ENCODE measurements at regions of chr4 and their contacts with region 1.

Region 1: DNA sequence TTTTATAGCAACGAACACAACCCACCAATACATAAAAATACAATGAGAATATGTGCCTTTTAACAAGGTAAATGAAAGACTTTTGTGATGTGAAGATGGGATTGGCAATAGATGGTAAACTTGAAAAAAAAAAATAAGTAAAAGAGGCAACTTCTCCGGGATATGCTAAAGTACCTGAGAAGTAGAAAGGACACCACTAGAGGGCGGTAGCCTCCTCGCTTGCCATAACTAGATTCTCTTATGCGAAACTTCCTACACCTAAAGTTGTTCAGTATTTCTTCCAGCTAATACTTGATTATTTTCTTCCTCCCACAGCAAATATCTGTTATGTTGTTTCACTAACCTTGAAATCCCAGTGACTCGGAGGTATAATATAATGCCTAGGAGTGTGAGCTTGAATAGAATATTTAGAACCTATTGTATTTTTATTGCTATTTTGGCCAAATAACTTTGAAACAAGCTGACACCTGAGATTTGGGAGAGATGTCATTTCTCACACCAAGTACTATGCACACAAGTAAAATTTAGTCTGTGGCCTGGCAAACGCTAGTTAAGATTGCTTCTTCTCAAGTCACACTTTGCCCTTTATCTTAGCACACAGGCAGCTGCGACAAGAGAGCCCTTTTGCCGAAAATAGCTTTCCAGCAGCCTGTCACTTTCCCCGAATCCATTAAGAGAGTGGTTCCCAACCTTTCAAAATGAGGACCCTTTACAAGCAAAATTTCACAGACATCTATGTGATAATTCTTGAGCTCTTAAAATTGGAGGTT is 44.9 kb upstream of the PDLIM5 start:
- DNase-seq: peak; percentile 48

Region 2: DNA sequence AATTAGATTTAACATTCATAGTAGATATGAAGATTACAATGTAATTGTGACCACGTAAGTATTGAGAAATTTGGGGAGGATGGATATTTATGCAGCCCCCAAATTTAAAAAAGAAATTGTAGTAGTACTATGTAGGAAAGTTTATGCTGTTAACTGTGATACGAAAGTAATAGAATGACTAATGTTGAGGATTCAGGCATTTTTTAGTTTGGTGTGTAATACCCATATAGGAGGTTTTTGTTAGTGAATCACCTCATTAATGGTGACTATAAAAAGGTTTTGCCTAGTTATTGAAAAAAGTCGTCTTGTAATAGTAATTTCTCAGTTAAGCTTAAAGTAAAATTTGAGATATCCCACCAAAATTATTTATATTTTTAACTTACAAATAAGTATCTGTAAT is 131.9 kb before region 1 on chr4:
- CTCF ChIA-PET with region 1: interaction called, 10 read pairs
- POLR2A ChIA-PET with region 1: no interaction called
- DNase-seq: no peak

Region 3: DNA sequence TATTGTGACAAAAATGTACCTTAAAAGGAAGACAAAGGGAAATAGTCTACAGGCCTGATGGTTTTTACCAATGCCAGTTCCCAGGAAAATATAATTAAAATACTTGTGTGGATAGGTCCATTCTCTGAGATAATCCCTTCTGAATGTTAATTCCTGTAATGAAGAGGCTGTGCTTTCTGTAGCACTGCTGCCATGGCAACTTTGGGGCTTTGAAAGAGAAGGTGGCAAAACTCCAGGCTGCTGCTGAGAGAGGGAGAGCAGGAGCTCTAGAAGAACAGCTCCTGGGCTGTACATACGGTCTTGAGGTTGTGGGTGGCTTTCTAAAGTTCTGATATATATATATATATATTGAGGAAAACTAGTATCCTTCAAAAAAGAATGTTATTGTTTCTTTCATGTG is 170.3 kb after region 1 on chr4:
- CTCF ChIA-PET with region 1: interaction called, 10 read pairs
- POLR2A ChIA-PET with region 1: no interaction called
- DNase-seq: no peak